Endothelial cell of umbilical vein (primary cell): ENCODE measurements at regions of chr7 and their contacts with region 1.

Region 1: DNA sequence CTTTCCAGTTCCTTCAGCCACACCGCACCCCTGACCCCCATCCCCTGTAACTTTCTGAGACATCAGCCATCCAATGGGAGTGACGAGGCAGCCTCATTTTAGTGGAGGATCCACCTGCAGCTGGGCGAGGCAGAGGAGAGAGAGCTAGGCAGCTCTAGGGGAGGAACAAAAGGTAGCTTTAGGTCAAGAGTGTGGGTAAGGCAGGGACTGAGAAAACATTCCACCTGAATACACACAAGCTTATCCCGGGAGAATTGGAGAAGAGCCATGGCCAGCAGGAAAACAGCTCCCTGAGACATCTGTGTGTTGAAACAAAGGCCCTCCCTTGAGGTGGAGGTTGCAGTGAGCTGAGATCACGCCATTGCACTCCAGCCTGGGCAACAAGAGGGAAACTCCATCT is 6.7 kb upstream of the KLRG2 start:
- DNase-seq: no peak
- H3K4me3 ChIP-seq: no peak overlapping the region
- H3K27ac ChIP-seq: no peak overlapping the region
- H3K4me1 ChIP-seq: no peaks in the 10 kb centered on the region
- H3K27me3 ChIP-seq: peaks cover 11 to 14% of the 10 kb centered on the region in 2 experiments
- CTCF ChIP-seq: no peak
- POLR2A ChIP-seq: no peak

Region 2: GRCh38 chr7:139505563-139505962 is 15.4 kb after region 1 on chr7:
- CTCF ChIA-PET with region 1: interaction called, 22 read pairs
- POLR2A ChIA-PET with region 1: no interaction called
- dilution Hi-C with region 1: no loop called
- intact Hi-C with region 1: no loop called
- DNase-seq: no peak
- H3K4me3 ChIP-seq: no peak overlapping the region
- H3K27ac ChIP-seq: no peak overlapping the region
- H3K4me1 ChIP-seq: no peaks in the 10 kb centered on the region
- H3K27me3 ChIP-seq: no peaks in the 10 kb centered on the region
- CTCF ChIP-seq: peak; percentile 8 to 28
- POLR2A ChIP-seq: no peak

Region 3: GRCh38 chr7:139557857-139558581 is 67.9 kb after region 1 on chr7:
- CTCF ChIA-PET with region 1: no interaction called
- POLR2A ChIA-PET with region 1: interaction called, 11 read pairs
- dilution Hi-C with region 1: no loop called
- intact Hi-C with region 1: no loop called
- DNase-seq: no peak
- H3K4me3 ChIP-seq: no peak overlapping the region
- H3K27ac ChIP-seq: no peak overlapping the region
- H3K4me1 ChIP-seq: no peaks in the 10 kb centered on the region
- H3K27me3 ChIP-seq: peaks cover 5 to 13% of the 10 kb centered on the region in 2 experiments
- CTCF ChIP-seq: no peak
- POLR2A ChIP-seq: no peak